ENCODE measurements at regions of chr3 and their contacts with region 1.

Region 1: DNA sequence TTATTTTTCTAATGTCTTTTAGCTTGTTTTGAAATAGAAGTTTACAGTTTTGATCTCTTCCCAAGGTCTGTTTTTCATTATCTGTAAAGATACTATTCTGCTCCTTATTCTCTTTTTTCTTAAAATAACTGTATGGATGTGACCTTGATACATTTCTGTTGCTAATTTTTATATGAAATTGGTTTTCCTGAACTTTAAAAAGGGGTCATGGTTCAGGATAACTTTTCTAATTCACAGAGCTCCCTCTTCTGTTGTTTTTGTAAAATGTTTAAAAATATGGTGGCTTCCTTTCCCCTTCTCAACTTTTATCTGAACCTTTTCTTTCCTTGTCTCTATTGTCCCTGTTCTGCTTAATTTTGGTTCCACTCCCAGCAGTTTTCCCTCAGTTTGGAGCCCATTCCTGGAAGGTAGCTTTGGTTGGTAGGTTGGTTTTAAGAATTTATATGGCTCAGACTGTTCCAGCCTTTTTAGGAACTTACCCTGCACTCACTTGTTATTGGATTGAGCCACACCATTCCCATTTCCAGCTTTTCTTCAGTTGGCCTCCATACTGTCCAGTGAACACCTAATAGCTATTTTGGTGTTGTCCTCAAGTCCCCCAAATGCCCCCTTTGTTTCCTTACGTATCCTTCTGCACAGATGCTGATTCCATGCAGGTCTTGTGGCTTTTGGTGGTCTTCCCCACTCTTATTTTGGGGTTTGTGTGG is 70.3 kb downstream of the SLMAP start:
- DNase-seq: peak; percentile 20

Region 2: GRCh38 chr3:57637391-57637790 is 189.0 kb before region 1 on chr3:
- in situ Hi-C with region 1: no loop called
- DNase-seq: no peak

Region 3: GRCh38 chr3:57659806-57660439 is 166.5 kb before region 1 on chr3:
- in situ Hi-C with region 1: loop called (anchors 25 kb)
- DNase-seq: no peak

Region 4: GRCh38 chr3:58591517-58592510 is 765.4 kb after region 1 on chr3:
- in situ Hi-C with region 1: no loop called
- DNase-seq: peak; percentile 32